Dendritic cell treated with granulocyte-macrophage colony-stimulating factor and Interleukin-4, amounts not matched to agents 40 ng/mL and 50 ng/mL, for 4 days (primary cell): ENCODE measurements at regions of chr22 and their contacts with region 1.

Region 1: DNA sequence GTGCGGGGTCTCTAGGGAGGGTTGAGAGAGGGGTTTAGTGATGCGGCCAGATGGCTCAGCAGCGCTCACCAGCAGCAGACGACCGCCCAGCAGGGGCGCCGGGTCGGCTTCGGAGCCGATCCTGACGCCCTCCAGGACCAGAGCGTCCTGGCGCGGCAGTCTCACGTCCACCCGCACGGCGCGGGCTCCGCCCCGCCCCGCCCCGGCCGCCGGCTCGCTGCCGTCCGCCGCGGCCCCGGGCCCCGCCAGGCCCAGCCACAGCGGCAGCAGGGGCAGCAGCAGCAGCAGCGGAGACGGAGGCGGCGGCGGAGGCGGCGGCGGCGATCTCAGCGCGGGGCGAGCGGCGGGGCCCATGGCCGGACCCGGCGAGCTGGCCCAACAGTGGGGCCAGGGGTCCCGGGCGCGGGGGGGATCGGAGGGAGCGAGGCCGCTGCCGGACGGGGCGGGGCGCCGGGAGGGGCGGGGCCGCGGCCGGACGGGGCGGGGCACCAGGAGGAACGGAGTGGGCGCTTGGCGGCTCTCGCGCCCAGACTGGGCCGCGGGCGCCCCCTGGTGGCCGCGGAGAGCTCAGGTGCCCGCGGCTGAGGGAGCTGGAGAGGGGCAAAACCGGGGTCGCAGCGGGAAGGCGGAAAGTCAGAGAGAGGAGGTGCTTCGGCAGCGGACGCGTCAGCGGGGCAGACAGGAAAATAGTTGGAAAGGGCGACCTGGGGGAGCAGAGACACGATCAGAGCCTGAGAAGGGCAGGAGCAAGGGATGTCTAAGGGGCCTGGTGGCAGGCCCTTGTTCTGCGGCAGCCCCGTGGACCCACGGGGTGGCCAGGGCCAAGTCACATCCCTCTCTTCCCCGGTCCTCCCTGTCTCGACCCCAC is at the start of gene RNF215:
- H3K4me3 Mint-ChIP-seq: peak within 1 kb of the TSS; percentile 81
- H3K27ac Mint-ChIP-seq: peak within 1 kb of the TSS; percentile 37
- H3K4me1 Mint-ChIP-seq: peaks cover 20% of the 10 kb centered on the region
- H3K27me3 Mint-ChIP-seq: peaks cover 7% of the 10 kb centered on the region

Region 2: DNA sequence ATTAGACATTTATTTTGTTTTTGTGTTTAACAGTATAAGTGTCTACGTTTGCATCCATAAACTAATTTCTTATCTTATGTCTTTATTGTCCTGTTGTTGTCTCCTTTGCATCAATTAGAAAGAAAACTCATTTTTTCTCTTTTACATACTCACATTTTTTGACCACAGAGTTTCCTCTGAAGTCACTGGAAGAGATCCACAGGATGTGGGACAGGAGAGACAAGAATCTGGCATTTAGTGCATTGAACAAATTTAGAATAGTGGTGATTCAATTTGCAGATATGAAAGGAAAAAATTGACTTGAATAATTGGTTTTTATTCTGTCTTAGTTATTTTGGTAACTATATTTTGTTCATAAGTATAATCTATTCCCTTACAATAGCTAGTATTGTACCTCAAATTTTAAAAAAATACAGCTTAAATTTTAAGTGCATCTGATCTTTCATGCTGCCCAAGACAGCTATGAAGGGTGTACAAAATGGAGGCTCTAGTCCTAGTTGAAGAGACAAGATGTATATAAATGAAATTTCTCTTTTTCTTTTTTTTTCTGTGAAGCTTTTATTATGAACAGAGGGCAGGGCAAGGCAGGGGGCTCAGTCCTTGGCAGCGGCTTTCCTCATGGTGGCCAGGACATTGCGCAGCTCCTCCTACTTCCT is 282.6 kb before region 1 on chr22:
- intact Hi-C with region 1: loop called (anchors 2 kb)
- H3K4me3 Mint-ChIP-seq: no peak overlapping the region
- H3K27ac Mint-ChIP-seq: no peak overlapping the region
- H3K4me1 Mint-ChIP-seq: peaks cover 8% of the 10 kb centered on the region
- H3K27me3 Mint-ChIP-seq: peaks cover 4% of the 10 kb centered on the region

Region 3: GRCh38 chr22:30262917-30263741 is 124.1 kb before region 1 on chr22:
- intact Hi-C with region 1: loop called (anchors 2 kb)
- H3K4me3 Mint-ChIP-seq: peak overlapping the region; percentile 55
- H3K27ac Mint-ChIP-seq: peak overlapping the region; percentile 22
- H3K4me1 Mint-ChIP-seq: peaks cover 80% of the 10 kb centered on the region
- H3K27me3 Mint-ChIP-seq: peaks cover 13% of the 10 kb centered on the region

Region 4: GRCh38 chr22:30326706-30327362 is 60.4 kb before region 1 on chr22 and contains the start of gene TBC1D10A:
- intact Hi-C with region 1: loop called (anchors 10 kb)
- H3K4me3 Mint-ChIP-seq: peak within 1 kb of the TSS; percentile 86
- H3K27ac Mint-ChIP-seq: peak within 1 kb of the TSS; percentile 85
- H3K4me1 Mint-ChIP-seq: peaks cover 48% of the 10 kb centered on the region
- H3K27me3 Mint-ChIP-seq: no peaks in the 10 kb centered on the region

Region 5: DNA sequence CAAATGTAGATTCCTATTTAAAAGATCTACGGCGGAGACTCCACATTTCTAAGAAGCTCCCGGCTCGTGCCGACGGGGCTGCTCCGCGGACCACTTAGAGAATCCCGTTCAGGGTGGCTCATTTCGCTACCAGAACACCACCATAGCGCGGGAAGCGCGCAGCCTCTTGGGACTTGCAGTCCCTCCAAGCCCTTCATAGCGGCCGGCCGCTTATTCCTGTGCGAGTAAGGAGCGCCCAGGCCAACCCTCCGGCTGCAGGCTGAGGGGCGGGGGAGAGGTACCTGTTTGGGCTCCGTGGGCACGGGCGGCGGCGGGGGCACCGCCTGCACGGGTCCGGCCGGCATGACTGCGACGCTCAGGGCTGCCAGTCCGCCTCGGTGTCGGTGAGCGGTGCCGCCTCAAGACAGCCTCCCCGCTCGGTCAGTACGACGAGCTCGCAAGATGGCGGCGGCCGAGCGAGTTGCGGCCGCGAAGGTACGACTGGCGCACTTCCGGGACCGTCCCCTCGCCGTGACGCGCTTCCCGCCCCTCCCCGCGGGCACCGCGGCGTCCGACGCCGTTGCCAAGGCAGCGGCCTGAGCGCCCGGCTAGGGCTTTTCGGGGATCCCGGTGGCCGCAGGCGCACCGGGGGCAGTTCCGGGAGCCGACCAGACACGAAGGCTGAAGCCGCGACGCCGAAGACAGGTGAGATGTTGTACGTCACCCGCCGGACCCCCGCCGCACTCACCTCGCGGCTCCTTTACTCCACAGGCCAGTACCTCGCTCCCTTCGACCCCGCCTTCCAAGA is 30.6 kb before region 1 on chr22 and contains the starts of genes CCDC157 and SF3A1:
- intact Hi-C with region 1: loop called (anchors 2 kb)
- H3K4me3 Mint-ChIP-seq: peak within 1 kb of the TSS; percentile 73
- H3K27ac Mint-ChIP-seq: peak within 1 kb of the TSS; percentile 67
- H3K4me1 Mint-ChIP-seq: peaks cover 46% of the 10 kb centered on the region
- H3K27me3 Mint-ChIP-seq: peaks cover 9% of the 10 kb centered on the region

Region 6: GRCh38 chr22:30423982-30424963 is 37.1 kb after region 1 on chr22:
- intact Hi-C with region 1: loop called (anchors 1 kb)
- H3K4me3 Mint-ChIP-seq: peak overlapping the region; percentile 88
- H3K27ac Mint-ChIP-seq: peak overlapping the region; percentile 95
- H3K4me1 Mint-ChIP-seq: peaks cover 59% of the 10 kb centered on the region
- H3K27me3 Mint-ChIP-seq: no peaks in the 10 kb centered on the region

Region 7: DNA sequence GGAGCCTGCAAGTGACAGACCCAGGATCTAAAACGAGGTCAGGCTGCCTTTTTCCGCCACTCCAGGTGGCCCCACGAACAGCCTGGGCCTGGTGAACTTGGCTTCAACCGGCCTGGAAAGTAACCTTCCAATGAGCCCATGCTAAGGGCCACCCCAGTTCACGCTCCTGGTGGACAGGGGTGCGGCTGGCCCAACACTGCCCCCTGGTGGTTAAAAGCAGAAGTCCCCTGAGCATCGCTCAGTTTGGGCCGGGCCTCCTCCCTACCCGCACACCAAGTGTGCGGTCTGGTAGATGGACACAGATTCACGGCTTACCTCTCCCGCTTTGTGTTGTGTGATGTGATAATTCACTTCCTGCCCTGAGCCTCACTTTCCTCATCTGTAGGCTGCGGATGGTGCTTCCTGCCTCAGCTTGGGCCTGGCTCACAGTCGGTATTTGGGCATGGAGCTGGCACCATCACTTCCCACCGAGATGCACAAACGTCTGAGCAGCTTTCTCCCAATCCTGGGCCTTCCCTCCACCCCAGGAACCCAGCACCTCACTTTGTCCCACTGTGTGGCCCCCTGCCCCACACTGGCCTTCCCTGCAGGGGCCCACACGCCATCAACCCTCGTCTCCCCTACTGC is 98.3 kb after region 1 on chr22:
- intact Hi-C with region 1: loop called (anchors 1 kb)
- H3K4me3 Mint-ChIP-seq: no peak overlapping the region
- H3K27ac Mint-ChIP-seq: no peak overlapping the region
- H3K4me1 Mint-ChIP-seq: no peaks in the 10 kb centered on the region
- H3K27me3 Mint-ChIP-seq: peaks cover 19% of the 10 kb centered on the region